Lower leg skin (tissue), 4 donors: ENCODE measurements at regions of chr17 and their contacts with region 1.

Region 1: GRCh38 chr17:40168262-40168832 is 8.9 kb upstream of the RAPGEFL1 start:
- DNase-seq: peak in 1 of 2 donors; percentile 37
- H3K4me3 ChIP-seq: no peak overlapping the region
- CTCF ChIP-seq: peak in 1 of 3 donors; percentile 74
- POLR2A ChIP-seq: no peak

Region 2: DNA sequence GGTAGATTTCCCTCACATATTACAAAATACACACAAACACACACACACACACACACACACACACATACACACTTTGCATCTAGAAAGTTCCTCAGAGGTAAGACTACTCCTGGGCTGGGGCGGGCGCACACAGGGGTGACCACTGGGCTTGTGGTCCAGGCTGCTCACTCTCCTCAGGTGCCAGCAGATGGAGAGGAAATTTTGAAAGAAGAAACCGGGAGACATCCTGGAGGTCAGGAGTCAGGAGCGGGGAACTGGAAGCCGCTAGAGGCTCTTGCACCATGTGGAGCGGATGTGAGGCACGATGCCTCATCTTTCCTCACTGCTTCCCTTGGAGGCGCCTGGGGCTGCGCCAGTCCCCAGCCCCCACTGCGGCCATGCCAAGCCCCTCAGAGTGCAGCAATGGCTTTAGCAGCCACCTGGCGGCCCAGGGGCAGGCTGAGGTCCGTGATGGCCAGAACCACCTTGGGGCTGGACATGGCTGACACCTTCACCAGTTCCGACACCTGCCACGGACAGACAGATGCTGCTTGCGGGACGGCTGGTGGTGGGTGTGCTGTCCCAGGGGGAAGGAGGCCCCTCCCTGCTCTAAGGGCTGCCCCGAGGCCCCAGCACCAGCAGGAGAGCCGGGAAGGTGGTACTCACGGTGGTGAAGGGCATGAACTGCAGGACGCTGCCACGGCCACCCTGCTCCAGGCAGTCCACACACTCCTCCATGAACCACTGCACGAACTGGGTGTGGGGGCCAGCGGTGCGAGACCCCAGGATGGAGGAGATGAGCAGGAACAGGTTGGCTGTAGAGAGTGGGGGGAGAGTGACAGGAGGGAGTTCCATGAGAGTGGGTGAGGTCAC is 149.0 kb before region 1 on chr17:
- intact Hi-C with region 1: loop called (anchors 10 kb)
- DNase-seq: no peak
- H3K4me3 ChIP-seq: no peak overlapping the region
- CTCF ChIP-seq: no peak
- POLR2A ChIP-seq: no peak

Region 3: DNA sequence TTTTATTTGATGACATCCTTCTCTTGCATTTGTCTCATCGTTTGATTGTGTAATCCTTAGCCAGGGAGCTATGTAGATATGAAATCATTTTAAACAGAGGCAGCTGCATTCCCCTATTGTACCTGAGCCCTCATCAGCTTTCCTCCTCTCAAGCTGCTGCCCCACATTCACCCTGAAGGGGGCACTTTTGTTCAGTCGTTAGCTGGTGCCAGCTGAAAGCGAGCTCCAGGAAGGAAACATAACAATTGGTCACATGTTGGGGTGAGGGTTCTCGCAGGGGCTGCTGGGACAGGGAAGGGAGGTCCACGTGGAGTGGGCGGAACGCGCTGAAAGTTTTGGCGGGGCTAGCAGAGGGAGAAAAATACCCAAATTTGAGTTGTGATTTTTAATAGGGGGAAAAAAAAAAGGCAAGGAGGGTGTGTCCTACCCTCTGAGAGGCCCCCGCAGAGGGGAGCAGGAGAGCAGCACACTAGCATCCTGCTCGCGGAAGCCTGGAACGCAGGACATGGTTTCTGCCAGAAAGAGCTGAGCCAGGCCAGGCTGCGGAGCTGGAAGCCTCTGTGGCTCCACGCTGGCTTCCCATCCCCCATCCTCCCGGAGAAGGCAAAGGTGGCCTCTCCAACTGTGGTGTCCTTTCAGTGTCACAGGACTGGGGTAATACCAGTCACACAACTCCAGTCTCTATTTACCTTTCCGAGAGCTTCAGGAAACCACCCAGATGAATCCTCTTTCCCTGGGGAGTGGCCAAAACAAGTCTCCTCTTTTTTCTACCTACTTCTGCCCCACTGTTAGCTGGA is 55.0 kb before region 1 on chr17:
- intact Hi-C with region 1: loop called (anchors 10 kb)
- DNase-seq: peak; percentile 96 to 99
- H3K4me3 ChIP-seq: peak overlapping the region; percentile 18
- CTCF ChIP-seq: peak in 1 of 3 donors; percentile 77
- POLR2A ChIP-seq: no peak

Region 4: GRCh38 chr17:40279407-40279806 is 111.1 kb after region 1 on chr17:
- intact Hi-C with region 1: no loop called
- DNase-seq: no peak
- H3K4me3 ChIP-seq: no peak overlapping the region
- CTCF ChIP-seq: no peak
- POLR2A ChIP-seq: no peak